Caco-2 (cell line): ENCODE measurements at regions of chr1 and their contacts with region 1.

Region 1: GRCh38 chr1:91929250-91929649 is 20.0 kb upstream of the BRDT start:
- DNase-seq: no peak
- H3K4me3 ChIP-seq: no peak overlapping the region
- H3K4me3 Mint-ChIP-seq: no peak overlapping the region
- H3K27ac Mint-ChIP-seq: peak overlapping the region; percentile 25
- H3K4me1 ChIP-seq: no peaks in the 10 kb centered on the region
- H3K4me1 Mint-ChIP-seq: peaks cover 8% of the 10 kb centered on the region
- H3K27me3 ChIP-seq: no peaks in the 10 kb centered on the region
- H3K27me3 Mint-ChIP-seq: no peaks in the 10 kb centered on the region
- CTCF ChIP-seq: no peak

Region 2: GRCh38 chr1:91876040-91876470 is 53.2 kb before region 1 on chr1:
- CTCF ChIA-PET with region 1: interaction called, 10 read pairs
- POLR2A ChIA-PET with region 1: no interaction called
- intact Hi-C with region 1: no loop called
- DNase-seq: no peak
- H3K4me3 ChIP-seq: no peak overlapping the region
- H3K4me3 Mint-ChIP-seq: no peak overlapping the region
- H3K27ac Mint-ChIP-seq: no peak overlapping the region
- H3K4me1 ChIP-seq: peaks cover 4% of the 10 kb centered on the region
- H3K4me1 Mint-ChIP-seq: peaks cover 20% of the 10 kb centered on the region
- H3K27me3 ChIP-seq: no peaks in the 10 kb centered on the region
- H3K27me3 Mint-ChIP-seq: no peaks in the 10 kb centered on the region
- CTCF ChIP-seq: no peak

Region 3: DNA sequence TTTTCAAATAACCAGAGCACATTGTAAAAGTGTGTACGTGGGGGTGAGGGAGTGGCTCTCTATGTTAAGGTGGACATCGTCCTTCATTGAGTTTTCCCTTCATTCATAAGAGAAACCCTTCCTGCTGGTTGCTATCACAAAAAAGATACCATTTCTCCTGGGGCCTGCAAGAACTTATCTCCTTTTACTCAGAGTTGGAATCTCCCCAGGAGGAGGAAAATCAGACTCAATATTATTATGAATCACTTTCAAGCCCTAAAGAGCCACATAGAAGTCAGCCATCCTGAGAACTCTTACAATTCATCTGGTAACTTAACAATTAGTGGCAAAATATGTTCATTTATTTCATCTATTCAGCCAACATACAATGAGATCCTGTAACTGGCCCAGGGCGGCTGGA is 16.2 kb before region 1 on chr1:
- CTCF ChIA-PET with region 1: no interaction called
- POLR2A ChIA-PET with region 1: no interaction called
- intact Hi-C with region 1: no loop called
- DNase-seq: no peak
- H3K4me3 ChIP-seq: no peak overlapping the region
- H3K4me3 Mint-ChIP-seq: no peak overlapping the region
- H3K27ac Mint-ChIP-seq: no peak overlapping the region
- H3K4me1 ChIP-seq: peaks cover 14% of the 10 kb centered on the region; the same call in 1 of the 2 replicates
- H3K4me1 Mint-ChIP-seq: peaks cover 25% of the 10 kb centered on the region
- H3K27me3 ChIP-seq: no peaks in the 10 kb centered on the region
- H3K27me3 Mint-ChIP-seq: no peaks in the 10 kb centered on the region
- CTCF ChIP-seq: no peak